ENCODE measurements at regions of chrX and their contacts with region 1.

Region 1: DNA sequence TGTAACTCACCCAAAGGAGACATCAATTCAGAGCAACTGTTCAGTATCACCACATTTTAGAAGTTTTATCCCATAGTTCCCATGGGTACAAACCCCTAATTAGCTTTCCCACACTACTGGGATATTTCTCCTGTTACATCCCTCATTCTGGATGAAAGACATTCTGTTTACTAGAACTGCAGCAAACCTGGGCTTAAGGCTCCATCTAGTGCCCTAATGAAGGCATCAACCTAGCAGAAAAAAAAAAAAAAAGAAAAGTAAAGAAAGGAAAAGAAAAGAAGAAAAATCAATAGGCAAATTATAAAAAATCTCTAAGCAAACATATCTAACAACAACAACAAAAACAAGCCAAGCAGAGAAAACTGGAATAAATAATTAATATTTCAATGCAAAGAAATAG is 133.7 kb upstream of the CPXCR1 start:
- DNase-seq: no peak
- ATAC-seq: peak; percentile 54; the same call in 2 of the 3 replicates
- H3K4me3 ChIP-seq: no peak overlapping the region
- H3K27ac ChIP-seq: no peak overlapping the region
- H3K4me1 ChIP-seq: no peaks in the 10 kb centered on the region
- H3K27me3 ChIP-seq: no peaks in the 10 kb centered on the region
- CTCF ChIP-seq: peak; percentile 4 to 39 (median 17); a peak in 1 of 6 replicates
- EP300 ChIP-seq: no peak
- POLR2A ChIP-seq: no peak
- RAD21 ChIP-seq: peak; percentile 58

Region 2: DNA sequence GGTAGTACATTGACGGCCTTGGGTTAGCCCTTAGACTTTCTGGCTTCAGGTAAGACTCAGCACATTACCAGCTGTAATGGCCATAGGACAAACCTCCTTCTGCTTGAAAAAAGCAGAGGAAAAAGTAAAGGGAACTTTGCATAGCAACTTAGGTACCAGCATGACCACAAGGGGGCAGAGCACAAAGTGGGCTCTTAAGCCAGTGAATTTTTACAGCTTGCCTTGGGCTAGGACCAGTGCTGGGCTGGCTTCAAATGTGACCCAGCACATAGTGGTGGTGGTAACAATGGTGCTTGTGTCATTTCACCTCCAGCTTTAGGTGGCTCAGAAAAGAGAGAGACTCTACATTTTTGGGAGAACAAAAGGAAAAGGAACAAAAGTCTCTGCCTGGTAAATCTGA is 1029.7 kb before region 1 on chrX:
- CTCF ChIA-PET with region 1: no interaction called
- POLR2A ChIA-PET with region 1: interaction called, 4 read pairs
- RAD21 ChIA-PET with region 1: no interaction called
- SMC1A ChIA-PET with region 1: interaction called, 3 read pairs
- in situ Hi-C with region 1: no loop called
- intact Hi-C with region 1: loop called (anchors 10 kb)
- DNase-seq: no peak
- ATAC-seq: peak; percentile 62
- H3K4me3 ChIP-seq: no peak overlapping the region
- H3K27ac ChIP-seq: no peak overlapping the region
- H3K4me1 ChIP-seq: no peaks in the 10 kb centered on the region
- H3K27me3 ChIP-seq: no peaks in the 10 kb centered on the region
- CTCF ChIP-seq: peak; percentile 34 to 48 (median 38); a peak in 4 of 6 replicates
- EP300 ChIP-seq: no peak
- POLR2A ChIP-seq: no peak
- RAD21 ChIP-seq: no peak

Region 3: GRCh38 chrX:88135735-88136134 is 477.6 kb before region 1 on chrX:
- CTCF ChIA-PET with region 1: interaction called, 4 read pairs
- POLR2A ChIA-PET with region 1: no interaction called
- RAD21 ChIA-PET with region 1: no interaction called
- SMC1A ChIA-PET with region 1: no interaction called
- in situ Hi-C with region 1: no loop called
- intact Hi-C with region 1: loop called (anchors 1 kb)
- DNase-seq: no peak
- ATAC-seq: no peak
- H3K4me3 ChIP-seq: no peak overlapping the region
- H3K27ac ChIP-seq: no peak overlapping the region
- H3K4me1 ChIP-seq: no peaks in the 10 kb centered on the region
- H3K27me3 ChIP-seq: no peaks in the 10 kb centered on the region
- CTCF ChIP-seq: peak in 1 of 3 experiments; percentile 11; a peak in 2 of 6 replicates
- EP300 ChIP-seq: no peak
- POLR2A ChIP-seq: no peak
- RAD21 ChIP-seq: 0 out of 2 replicates have a peak, but pooled peaks have one; percentile 15

Region 4: DNA sequence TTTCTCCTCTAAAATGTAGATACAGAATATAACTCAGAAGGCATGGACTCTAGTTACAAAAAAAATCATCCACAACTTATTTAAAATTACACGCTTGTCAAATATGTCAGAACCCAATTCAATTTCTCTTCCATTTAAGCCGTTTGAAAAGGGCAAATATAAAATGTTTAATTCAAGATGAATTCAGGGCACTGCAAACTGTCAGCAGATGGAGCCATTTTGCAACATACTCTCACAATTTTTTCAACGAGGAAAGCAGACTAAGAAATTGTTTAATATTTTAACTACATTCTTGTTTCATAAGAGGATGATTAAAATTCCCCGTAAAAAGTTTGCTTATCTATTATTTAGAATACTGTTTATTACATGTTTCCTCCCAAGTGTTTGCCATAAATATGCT is 187.6 kb before region 1 on chrX:
- CTCF ChIA-PET with region 1: no interaction called
- POLR2A ChIA-PET with region 1: no interaction called
- RAD21 ChIA-PET with region 1: no interaction called
- SMC1A ChIA-PET with region 1: no interaction called
- in situ Hi-C with region 1: no loop called
- intact Hi-C with region 1: loop called (anchors 10 kb)
- DNase-seq: no peak
- ATAC-seq: no peak
- H3K4me3 ChIP-seq: no peak overlapping the region
- H3K27ac ChIP-seq: no peak overlapping the region
- H3K4me1 ChIP-seq: no peaks in the 10 kb centered on the region
- H3K27me3 ChIP-seq: no peaks in the 10 kb centered on the region
- CTCF ChIP-seq: peak in 1 of 3 experiments; percentile 6; a peak in 1 of 6 replicates
- EP300 ChIP-seq: no peak
- POLR2A ChIP-seq: no peak
- RAD21 ChIP-seq: no peak

Region 5: DNA sequence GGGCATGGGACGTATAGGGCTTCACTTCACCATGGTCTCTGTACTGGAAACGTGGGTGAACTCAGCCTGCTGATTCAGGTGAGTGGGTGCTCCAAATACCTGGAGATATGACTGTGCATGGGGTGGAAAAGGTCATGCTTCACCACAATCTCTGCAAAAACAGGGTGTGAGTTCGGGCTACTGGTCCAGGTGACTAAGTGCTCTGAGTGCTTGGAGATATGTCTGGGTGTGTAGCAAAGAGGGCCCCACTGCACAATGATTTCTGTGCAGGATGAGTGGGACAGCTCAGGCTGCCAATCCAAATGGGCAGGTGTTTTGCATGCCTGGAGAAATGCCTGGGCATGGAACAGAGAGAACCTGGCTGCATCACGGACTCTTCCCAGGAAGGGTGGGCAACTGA is 122.5 kb after region 1 on chrX:
- CTCF ChIA-PET with region 1: no interaction called
- POLR2A ChIA-PET with region 1: no interaction called
- RAD21 ChIA-PET with region 1: no interaction called
- SMC1A ChIA-PET with region 1: no interaction called
- in situ Hi-C with region 1: no loop called
- intact Hi-C with region 1: no loop called
- DNase-seq: no peak
- ATAC-seq: no peak
- H3K4me3 ChIP-seq: no peak overlapping the region
- H3K27ac ChIP-seq: no peak overlapping the region
- H3K4me1 ChIP-seq: no peaks in the 10 kb centered on the region
- H3K27me3 ChIP-seq: no peaks in the 10 kb centered on the region
- CTCF ChIP-seq: no peak
- EP300 ChIP-seq: no peak
- POLR2A ChIP-seq: no peak
- RAD21 ChIP-seq: no peak